Right lobe of liver (tissue), 6 donors: ENCODE measurements at regions of chr7 and their contacts with region 1.

Region 1: DNA sequence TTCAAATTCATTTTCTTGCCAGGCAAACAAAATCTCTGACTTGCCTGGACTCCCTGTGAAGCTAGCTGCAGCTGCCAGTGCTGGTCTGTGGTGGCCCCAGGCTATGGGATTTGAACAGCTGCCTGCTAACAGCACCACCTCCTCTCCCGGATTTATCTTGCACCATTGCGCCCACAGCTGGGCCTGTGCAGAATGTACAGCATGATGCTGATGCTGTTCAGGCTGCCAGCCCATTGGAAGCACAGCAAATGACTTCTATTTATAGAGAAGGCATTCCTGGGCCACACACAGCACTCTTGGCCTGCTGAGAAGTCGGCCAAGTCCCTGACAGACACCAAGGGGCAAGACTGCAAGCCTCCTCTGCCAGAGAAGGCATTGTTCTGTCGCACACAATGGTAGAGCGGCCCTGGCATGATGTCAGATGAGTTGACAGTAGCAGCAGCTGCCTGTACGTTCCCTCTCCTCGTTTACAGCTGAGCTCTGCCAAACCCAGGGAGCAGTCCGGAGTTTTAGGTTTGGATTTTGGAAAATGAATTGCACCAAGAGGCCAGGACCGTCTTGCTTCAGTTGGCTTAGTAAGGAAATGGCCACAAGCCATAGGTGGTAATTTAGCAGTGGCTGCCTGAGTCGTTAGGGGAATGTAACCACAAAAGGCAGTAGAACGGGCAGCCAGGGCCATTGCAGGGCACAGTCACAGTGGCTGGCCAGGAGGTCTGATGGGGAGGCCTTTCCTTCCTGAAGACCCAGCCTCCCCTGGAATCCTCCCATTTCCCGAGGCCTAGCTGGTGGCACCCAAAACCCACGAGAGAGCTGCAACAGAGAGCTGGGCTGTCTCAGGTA is 38.5 kb downstream of the MTURN start:
- DNase-seq: no peak
- ATAC-seq: peak in 1 of 4 donors; percentile 21
- H3K4me3 ChIP-seq: no peak overlapping the region
- H3K27ac ChIP-seq: no peak overlapping the region
- H3K4me1 ChIP-seq: no peaks in the 10 kb centered on the region
- H3K27me3 ChIP-seq: no peaks in the 10 kb centered on the region
- CTCF ChIP-seq: no peak
- POLR2A ChIP-seq: no peak

Region 2: DNA sequence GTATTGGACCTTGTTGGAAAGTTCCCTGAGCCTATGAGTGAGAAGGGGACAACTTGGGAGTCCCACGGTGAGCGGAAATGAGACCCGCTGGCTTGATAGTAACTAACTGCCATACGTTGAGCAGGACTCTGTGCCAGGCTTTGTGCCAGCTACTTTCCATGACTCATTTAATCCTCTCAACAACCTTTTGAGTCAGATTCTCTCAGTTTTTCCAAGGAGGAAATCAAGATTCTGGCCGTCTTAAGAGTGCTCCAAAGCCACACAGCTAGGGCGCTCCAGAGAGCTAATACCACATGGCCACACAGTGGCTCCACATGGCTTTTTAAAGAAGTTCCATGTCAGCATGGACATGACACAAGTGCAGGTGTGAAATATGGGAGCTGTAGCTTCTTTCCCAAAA is 249.6 kb after region 1 on chr7:
- intact Hi-C with region 1: loop called in 1 of 2 experiments (anchors 10 kb)
- DNase-seq: no peak
- ATAC-seq: no peak
- H3K4me3 ChIP-seq: no peak overlapping the region
- H3K27ac ChIP-seq: no peak overlapping the region
- H3K4me1 ChIP-seq: peaks cover 0 to 4% (median 0%) of the 10 kb centered on the region in 4 donors
- H3K27me3 ChIP-seq: no peaks in the 10 kb centered on the region
- CTCF ChIP-seq: no peak
- POLR2A ChIP-seq: no peak